ENCODE measurements at regions of chrX and their contacts with region 1.

Region 1: GRCh38 chrX:48801280-48802088 is at the start of gene HDAC6:
- DNase-seq: peak; percentile 91 to 98 (median 97)
- H3K4me3 ChIP-seq: peak within 1 kb of the TSS; percentile 65 to 77
- H3K4me3 Mint-ChIP-seq: peak within 1 kb of the TSS; percentile 94 to 98 (median 96)
- H3K27ac ChIP-seq: peak within 1 kb of the TSS; percentile 87
- H3K27ac Mint-ChIP-seq: peak within 1 kb of the TSS; percentile 90 to 99 (median 99)
- H3K4me1 ChIP-seq: peaks cover 16% of the 10 kb centered on the region
- H3K4me1 Mint-ChIP-seq: peaks cover 3 to 25% (median 16%) of the 10 kb centered on the region in 4 donors
- H3K27me3 ChIP-seq: no peaks in the 10 kb centered on the region
- H3K27me3 Mint-ChIP-seq: no peaks in the 10 kb centered on the region
- total RNA-seq, gene HDAC6: 121 to 126 TPM

Region 2: DNA sequence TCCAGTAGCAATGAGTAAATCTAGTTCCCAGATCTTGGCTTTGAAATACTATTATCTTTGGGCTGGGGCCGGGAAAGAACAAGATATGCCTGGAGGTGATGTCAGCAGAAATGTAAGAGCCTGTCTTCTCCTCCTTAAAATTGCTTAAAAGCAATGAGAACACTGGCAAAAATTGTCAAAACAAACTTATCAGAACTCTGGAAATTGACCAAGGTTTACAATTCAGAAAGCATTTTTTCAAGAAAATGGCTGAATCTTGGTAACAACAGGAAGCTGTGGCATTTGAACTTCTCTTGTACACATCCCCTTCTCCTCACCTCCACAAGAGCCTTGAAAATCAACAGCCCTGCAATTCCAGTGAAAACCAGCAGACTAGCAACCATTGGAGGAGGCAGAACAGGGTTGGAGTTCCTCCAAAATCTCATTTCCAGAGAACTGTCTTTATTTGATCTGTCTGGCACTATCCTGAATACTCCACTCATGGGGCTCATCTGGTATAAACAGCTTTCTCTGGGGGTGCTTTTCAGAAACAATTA is 1205.7 kb before region 1 on chrX:
- CTCF ChIA-PET with region 1: no interaction called
- POLR2A ChIA-PET with region 1: no interaction called
- intact Hi-C with region 1: no loop called
- DNase-seq: no peak
- H3K4me3 ChIP-seq: no peak overlapping the region
- H3K4me3 Mint-ChIP-seq: peak overlapping the region in 5 of 8 donors; percentile 20 to 66 (median 48)
- H3K27ac ChIP-seq: no peak overlapping the region
- H3K27ac Mint-ChIP-seq: peak overlapping the region in 6 of 7 donors; percentile 48 to 89 (median 66)
- H3K4me1 ChIP-seq: peaks cover 19% of the 10 kb centered on the region
- H3K4me1 Mint-ChIP-seq: peaks cover 9 to 24% (median 14%) of the 10 kb centered on the region in 4 donors
- H3K27me3 ChIP-seq: no peaks in the 10 kb centered on the region
- H3K27me3 Mint-ChIP-seq: no peaks in the 10 kb centered on the region

Region 3: DNA sequence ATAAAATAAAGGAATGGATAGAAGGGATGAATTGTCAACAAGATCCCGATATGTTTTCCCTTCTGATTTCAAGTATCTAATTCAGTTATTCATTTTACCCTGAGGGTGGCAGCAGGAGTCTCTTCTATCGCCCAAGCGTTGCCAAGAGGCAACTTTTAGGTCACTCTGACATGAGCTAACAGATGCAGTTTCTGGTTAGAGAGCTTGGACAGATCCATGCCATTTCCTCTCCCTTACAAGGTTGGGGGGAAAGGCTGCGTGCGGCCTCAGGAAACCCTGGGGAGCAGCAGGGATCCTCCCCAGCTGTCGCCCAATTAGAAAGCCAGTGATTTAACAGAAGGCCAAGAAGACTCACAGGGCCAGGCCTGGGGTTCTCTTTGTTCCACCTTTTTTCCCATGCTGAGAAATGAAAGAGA is 153.1 kb before region 1 on chrX:
- CTCF ChIA-PET with region 1: interaction called, 11 read pairs
- POLR2A ChIA-PET with region 1: interaction called, 10 read pairs
- intact Hi-C with region 1: no loop called
- DNase-seq: peak; percentile 46 to 62 (median 47)
- H3K4me3 ChIP-seq: no peak overlapping the region
- H3K4me3 Mint-ChIP-seq: no peak overlapping the region
- H3K27ac ChIP-seq: no peak overlapping the region
- H3K27ac Mint-ChIP-seq: peak overlapping the region in 4 of 7 donors; percentile 55 to 89 (median 74)
- H3K4me1 ChIP-seq: no peaks in the 10 kb centered on the region
- H3K4me1 Mint-ChIP-seq: peaks cover 0 to 8% (median 4%) of the 10 kb centered on the region in 4 donors
- H3K27me3 ChIP-seq: no peaks in the 10 kb centered on the region
- H3K27me3 Mint-ChIP-seq: no peaks in the 10 kb centered on the region

Region 4: GRCh38 chrX:48683411-48683982 is 118.0 kb before region 1 on chrX and contains the start of gene WAS:
- CTCF ChIA-PET with region 1: no interaction called
- POLR2A ChIA-PET with region 1: interaction called, 18 read pairs
- intact Hi-C with region 1: no loop called
- DNase-seq: peak; percentile 54 to 63 (median 58)
- H3K4me3 ChIP-seq: peak within 1 kb of the TSS; percentile 79 to 93
- H3K4me3 Mint-ChIP-seq: peak within 1 kb of the TSS; percentile 86 to 95 (median 93)
- H3K27ac ChIP-seq: peak within 1 kb of the TSS; percentile 69
- H3K27ac Mint-ChIP-seq: peak within 1 kb of the TSS; percentile 88 to 95 (median 93)
- H3K4me1 ChIP-seq: peaks cover 48% of the 10 kb centered on the region
- H3K4me1 Mint-ChIP-seq: peaks cover 32 to 66% (median 44%) of the 10 kb centered on the region in 4 donors
- H3K27me3 ChIP-seq: no peaks in the 10 kb centered on the region
- H3K27me3 Mint-ChIP-seq: no peaks in the 10 kb centered on the region
- total RNA-seq, gene WAS: 108 to 110 TPM

Region 5: GRCh38 chrX:48715072-48715471 is 86.4 kb before region 1 on chrX:
- CTCF ChIA-PET with region 1: no interaction called
- POLR2A ChIA-PET with region 1: interaction called, 21 read pairs
- intact Hi-C with region 1: loop called (anchors 1 kb)
- DNase-seq: no peak
- H3K4me3 ChIP-seq: no peak overlapping the region
- H3K4me3 Mint-ChIP-seq: peak overlapping the region; percentile 2 to 75 (median 47)
- H3K27ac ChIP-seq: peak overlapping the region; percentile 47
- H3K27ac Mint-ChIP-seq: peak overlapping the region; percentile 83 to 97 (median 95)
- H3K4me1 ChIP-seq: peaks cover 90% of the 10 kb centered on the region
- H3K4me1 Mint-ChIP-seq: peaks cover 76 to 85% (median 80%) of the 10 kb centered on the region in 4 donors
- H3K27me3 ChIP-seq: no peaks in the 10 kb centered on the region
- H3K27me3 Mint-ChIP-seq: no peaks in the 10 kb centered on the region

Region 6: GRCh38 chrX:48826135-48826875 is 24.8 kb after region 1 on chrX and contains the start of gene ERAS:
- CTCF ChIA-PET with region 1: no interaction called
- POLR2A ChIA-PET with region 1: no interaction called
- intact Hi-C with region 1: no loop called
- DNase-seq: peak in 1 of 5 donors; percentile 7
- H3K4me3 ChIP-seq: no peak within 1 kb of the TSS
- H3K4me3 Mint-ChIP-seq: peak within 1 kb of the TSS in 6 of 8 donors; percentile 35 to 68 (median 58)
- H3K27ac ChIP-seq: no peak within 1 kb of the TSS
- H3K27ac Mint-ChIP-seq: no peak within 1 kb of the TSS
- H3K4me1 ChIP-seq: no peaks in the 10 kb centered on the region
- H3K4me1 Mint-ChIP-seq: peaks cover 0 to 5% (median 4%) of the 10 kb centered on the region in 4 donors
- H3K27me3 ChIP-seq: no peaks in the 10 kb centered on the region
- H3K27me3 Mint-ChIP-seq: peaks cover 16 to 22% of the 10 kb centered on the region in 2 donors
- total RNA-seq, gene ERAS: not detected

Region 7: GRCh38 chrX:48897621-48898306 is 96.3 kb after region 1 on chrX and contains the starts of genes PQBP1 and TIMM17B:
- CTCF ChIA-PET with region 1: no interaction called
- POLR2A ChIA-PET with region 1: interaction called, 7 read pairs
- intact Hi-C with region 1: loop called (anchors 5 kb)
- DNase-seq: peak; percentile 88 to 93 (median 92)
- H3K4me3 ChIP-seq: peak within 1 kb of the TSS; percentile 78 to 92
- H3K4me3 Mint-ChIP-seq: peak within 1 kb of the TSS; percentile 86 to 96 (median 92)
- H3K27ac ChIP-seq: peak within 1 kb of the TSS; percentile 93
- H3K27ac Mint-ChIP-seq: peak within 1 kb of the TSS; percentile 88 to 99 (median 96)
- H3K4me1 ChIP-seq: peaks cover 24% of the 10 kb centered on the region
- H3K4me1 Mint-ChIP-seq: peaks cover 4 to 34% (median 17%) of the 10 kb centered on the region in 4 donors
- H3K27me3 ChIP-seq: no peaks in the 10 kb centered on the region
- H3K27me3 Mint-ChIP-seq: no peaks in the 10 kb centered on the region
- total RNA-seq, gene PQBP1: 59.6 to 64.4 TPM
- total RNA-seq, gene TIMM17B: 42.6 to 46.2 TPM

Region 8: GRCh38 chrX:49002091-49002935 is 200.8 kb after region 1 on chrX and contains the start of gene GRIPAP1:
- CTCF ChIA-PET with region 1: no interaction called
- POLR2A ChIA-PET with region 1: interaction called, 4 read pairs
- intact Hi-C with region 1: loop called (anchors 1 kb)
- DNase-seq: peak; percentile 82 to 94 (median 86)
- H3K4me3 ChIP-seq: peak within 1 kb of the TSS; percentile 79 to 86
- H3K4me3 Mint-ChIP-seq: peak within 1 kb of the TSS; percentile 91 to 99 (median 97)
- H3K27ac ChIP-seq: peak within 1 kb of the TSS; percentile 97
- H3K27ac Mint-ChIP-seq: peak within 1 kb of the TSS; percentile 93 to 99 (median 98)
- H3K4me1 ChIP-seq: peaks cover 27% of the 10 kb centered on the region
- H3K4me1 Mint-ChIP-seq: peaks cover 17 to 36% (median 27%) of the 10 kb centered on the region in 4 donors
- H3K27me3 ChIP-seq: no peaks in the 10 kb centered on the region
- H3K27me3 Mint-ChIP-seq: no peaks in the 10 kb centered on the region
- total RNA-seq, gene GRIPAP1: 99.6 to 111 TPM

Region 9: GRCh38 chrX:49269010-49269767 is 467.7 kb after region 1 on chrX:
- CTCF ChIA-PET with region 1: no interaction called
- POLR2A ChIA-PET with region 1: no interaction called
- intact Hi-C with region 1: loop called (anchors 5 kb)
- DNase-seq: peak; percentile 92 to 98 (median 96)
- H3K4me3 ChIP-seq: peak overlapping the region; percentile 65 to 68
- H3K4me3 Mint-ChIP-seq: peak overlapping the region; percentile 89 to 99 (median 95)
- H3K27ac ChIP-seq: peak overlapping the region; percentile 95
- H3K27ac Mint-ChIP-seq: peak overlapping the region; percentile 99 to 100 (median 100)
- H3K4me1 ChIP-seq: peaks cover 47% of the 10 kb centered on the region
- H3K4me1 Mint-ChIP-seq: peaks cover 21 to 65% (median 47%) of the 10 kb centered on the region in 4 donors
- H3K27me3 ChIP-seq: no peaks in the 10 kb centered on the region
- H3K27me3 Mint-ChIP-seq: no peaks in the 10 kb centered on the region